ENCODE measurements at regions of chr16 and their contacts with region 1.

Region 1: DNA sequence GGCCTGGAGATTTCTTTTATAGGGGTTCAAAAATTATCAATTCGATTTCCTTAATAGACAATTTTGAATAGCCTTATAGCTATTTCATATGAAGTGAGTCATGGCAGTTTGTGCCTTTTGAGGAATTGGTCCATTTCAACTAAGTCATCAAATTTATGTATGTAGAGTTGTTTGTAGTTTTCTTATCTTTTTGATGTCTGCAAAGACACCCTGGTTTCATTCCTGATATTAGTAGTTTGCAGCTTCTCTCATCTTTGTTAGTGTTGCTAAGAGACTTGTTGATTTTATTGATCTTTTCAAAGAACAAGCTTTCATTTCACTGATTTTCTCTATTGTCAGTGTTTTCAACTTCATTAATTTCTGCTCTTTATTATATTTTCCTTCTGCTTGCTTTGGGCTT is 44.2 kb downstream of the N4BP1 start:
- DNase-seq: no peak
- H3K4me3 Mint-ChIP-seq: no peak overlapping the region
- H3K27ac Mint-ChIP-seq: peak overlapping the region; percentile 87
- H3K4me1 Mint-ChIP-seq: peaks cover 76% of the 10 kb centered on the region
- H3K27me3 Mint-ChIP-seq: no peaks in the 10 kb centered on the region

Region 2: GRCh38 chr16:48576927-48577326 is 11.2 kb after region 1 on chr16:
- intact Hi-C with region 1: loop called (anchors 1 kb)
- DNase-seq: no peak
- H3K4me3 Mint-ChIP-seq: peak overlapping the region; percentile 38
- H3K27ac Mint-ChIP-seq: peak overlapping the region; percentile 84
- H3K4me1 Mint-ChIP-seq: peaks cover 68% of the 10 kb centered on the region
- H3K27me3 Mint-ChIP-seq: no peaks in the 10 kb centered on the region

Region 3: DNA sequence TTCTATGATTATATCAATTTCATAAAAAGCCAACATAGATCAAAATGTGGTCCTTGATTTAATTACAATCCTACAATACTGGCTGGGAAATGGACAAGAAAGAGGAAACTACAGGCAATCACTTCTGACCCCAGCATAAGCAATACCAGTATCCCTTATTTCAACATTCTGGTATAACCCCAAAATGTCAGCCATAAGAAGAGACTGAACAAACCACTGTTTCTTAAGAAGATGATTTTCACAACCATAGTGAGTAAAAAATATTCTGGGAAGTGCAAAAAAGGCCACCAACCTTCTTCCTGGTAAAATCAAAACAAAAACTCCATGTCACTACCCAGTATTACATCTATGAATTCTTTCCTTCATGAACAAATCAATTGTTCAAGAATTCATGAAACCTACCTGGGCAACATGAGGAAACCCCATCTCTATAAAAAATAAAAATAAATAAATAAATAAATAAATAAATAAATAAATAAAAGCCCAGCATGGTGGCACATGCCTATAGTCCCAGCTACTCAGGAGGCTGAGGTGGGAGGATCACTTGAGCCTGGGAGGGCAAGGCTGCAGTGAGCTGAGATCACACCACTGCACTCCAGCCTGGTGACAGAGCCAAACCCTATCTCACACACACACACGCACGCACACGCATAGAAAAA is 36.7 kb after region 1 on chr16:
- intact Hi-C with region 1: no loop called
- DNase-seq: no peak
- H3K4me3 Mint-ChIP-seq: peak overlapping the region; percentile 34
- H3K27ac Mint-ChIP-seq: peak overlapping the region; percentile 68
- H3K4me1 Mint-ChIP-seq: peaks cover 50% of the 10 kb centered on the region
- H3K27me3 Mint-ChIP-seq: no peaks in the 10 kb centered on the region

Region 4: DNA sequence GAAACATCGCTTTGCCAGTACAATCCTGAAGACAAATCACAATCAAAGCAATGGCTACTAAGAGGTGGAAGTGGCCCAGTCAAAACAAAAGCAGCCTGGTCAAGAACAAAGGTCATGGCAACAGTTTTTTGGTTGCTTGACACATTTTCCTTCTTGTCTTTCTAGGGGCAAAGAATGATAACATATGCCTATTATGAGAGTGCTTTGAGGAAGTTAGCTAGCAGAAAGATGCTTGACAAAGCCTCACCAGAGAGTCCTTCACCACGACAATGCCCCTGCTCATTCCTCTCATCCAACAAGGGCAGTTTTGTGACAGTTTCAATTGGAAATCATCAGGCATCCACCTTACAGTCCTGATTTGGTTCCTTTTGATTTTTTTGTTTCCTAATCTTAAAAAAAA is 76.0 kb after region 1 on chr16:
- intact Hi-C with region 1: no loop called
- DNase-seq: no peak
- H3K4me3 Mint-ChIP-seq: no peak overlapping the region
- H3K27ac Mint-ChIP-seq: no peak overlapping the region
- H3K4me1 Mint-ChIP-seq: no peaks in the 10 kb centered on the region
- H3K27me3 Mint-ChIP-seq: peaks cover 7% of the 10 kb centered on the region